ENCODE measurements at regions of chr12 and their contacts with region 1.

Region 1: GRCh38 chr12:53675651-53676453 is at the start of gene ATP5MC2:
- DNase-seq: peak; percentile 97
- ATAC-seq: peak; percentile 95
- total RNA-seq, gene ATP5MC2: 323 to 371 TPM

Region 2: DNA sequence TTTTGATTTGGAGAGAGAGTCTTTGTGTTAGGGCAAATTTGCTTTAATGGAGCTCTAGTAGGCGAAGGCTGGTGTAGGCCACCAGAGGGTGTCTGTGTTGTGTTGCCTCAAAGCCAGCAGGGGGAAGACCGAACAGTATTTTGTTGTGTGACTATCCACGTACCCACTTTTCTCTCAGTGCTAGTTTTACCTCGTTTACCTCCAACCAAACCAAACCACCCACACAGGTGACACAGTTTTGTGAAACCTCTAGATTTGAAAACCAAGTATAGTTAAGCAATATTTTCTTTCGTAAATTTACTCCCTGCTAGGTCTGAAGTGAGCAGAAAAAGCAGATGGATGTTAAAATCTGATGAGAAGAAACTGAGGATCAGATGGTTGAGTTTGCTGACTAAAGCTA is 132.3 kb before region 1 on chr12:
- intact Hi-C with region 1: loop called (anchors 5 to 10 kb)
- DNase-seq: peak; percentile 47 to 49
- ATAC-seq: peak; percentile 81

Region 3: DNA sequence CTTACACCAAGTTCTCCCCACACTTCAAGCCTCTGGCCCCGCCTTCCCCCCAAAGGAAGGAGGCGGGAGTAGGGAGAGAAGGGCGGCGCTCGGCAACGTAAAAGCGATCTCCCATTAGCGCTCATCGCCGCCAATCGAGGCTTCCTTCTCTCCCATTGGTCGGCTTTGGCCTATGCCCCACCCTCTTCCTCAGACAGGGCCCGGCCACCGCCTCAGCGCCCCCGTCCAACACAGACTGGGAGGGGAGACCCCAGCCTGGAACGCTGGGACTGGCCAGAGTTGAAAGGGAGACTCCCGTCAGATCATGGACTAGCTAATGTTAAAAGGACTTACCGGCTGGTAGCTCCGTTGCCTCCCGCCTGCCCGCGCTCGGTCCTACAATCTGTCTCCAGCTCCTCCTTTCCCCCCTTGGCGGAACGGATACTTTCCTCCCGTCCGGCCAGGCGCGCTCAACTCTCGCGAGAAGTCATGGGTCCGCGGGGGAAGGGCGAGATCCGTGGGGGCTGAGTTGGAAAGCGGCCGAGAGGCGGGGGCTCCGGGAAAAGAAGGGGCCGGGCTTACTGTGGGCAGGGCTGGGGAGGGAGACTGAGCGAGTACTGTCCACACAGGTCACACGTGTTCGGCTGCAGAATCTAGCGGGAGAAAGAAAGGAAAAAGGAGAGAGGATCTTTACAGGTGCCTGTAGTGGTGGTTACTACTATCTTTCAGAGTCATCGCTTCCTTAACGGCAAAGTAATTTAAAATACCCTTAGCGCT is 49.7 kb before region 1 on chr12 and contains the start of gene ATF7:
- intact Hi-C with region 1: loop called in 1 of 2 experiments (anchors 10 kb)
- DNase-seq: peak; percentile 97 to 98
- ATAC-seq: peak; percentile 91
- total RNA-seq, gene ATF7: 38.3 to 39.2 TPM